Left colon (tissue), 2 donors: ENCODE measurements at regions of chr12 and their contacts with region 1.

Region 1: DNA sequence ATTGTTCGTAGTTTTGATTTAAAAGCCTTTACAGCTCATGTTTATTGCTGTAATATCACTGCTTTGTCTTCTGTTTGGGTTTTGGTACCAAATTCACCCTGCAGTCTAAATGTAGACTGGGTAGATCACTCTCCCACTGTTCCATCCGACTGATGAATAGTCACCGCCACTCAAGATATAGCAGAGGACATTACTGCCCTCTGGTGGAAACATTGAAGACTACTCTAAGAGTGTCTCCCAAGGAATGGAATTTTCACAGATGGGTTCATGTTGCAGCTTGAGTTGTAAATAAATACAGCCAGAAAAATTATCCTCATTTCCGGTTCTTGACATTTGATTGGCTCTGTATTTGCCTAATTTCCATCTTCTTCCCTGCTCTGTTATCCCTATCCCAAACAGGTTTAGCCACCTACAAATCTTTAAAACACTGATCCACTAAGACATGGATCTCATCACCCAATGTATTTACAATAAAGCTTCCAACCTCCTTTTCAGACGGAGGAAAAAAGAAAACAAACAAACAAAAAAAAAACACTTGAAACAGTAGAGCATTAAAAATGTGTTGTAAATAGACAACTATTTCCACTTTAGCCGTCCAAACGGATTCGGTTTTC is 198.3 kb upstream of the CPNE8 start:
- DNase-seq: no peak
- ATAC-seq: peak; percentile 96

Region 2: GRCh38 chr12:38921025-38921677 is 182.5 kb before region 1 on chr12:
- intact Hi-C with region 1: loop called in 1 of 2 experiments (anchors 5 kb)
- DNase-seq: peak; percentile 60 to 75
- ATAC-seq: peak; percentile 96

Region 3: DNA sequence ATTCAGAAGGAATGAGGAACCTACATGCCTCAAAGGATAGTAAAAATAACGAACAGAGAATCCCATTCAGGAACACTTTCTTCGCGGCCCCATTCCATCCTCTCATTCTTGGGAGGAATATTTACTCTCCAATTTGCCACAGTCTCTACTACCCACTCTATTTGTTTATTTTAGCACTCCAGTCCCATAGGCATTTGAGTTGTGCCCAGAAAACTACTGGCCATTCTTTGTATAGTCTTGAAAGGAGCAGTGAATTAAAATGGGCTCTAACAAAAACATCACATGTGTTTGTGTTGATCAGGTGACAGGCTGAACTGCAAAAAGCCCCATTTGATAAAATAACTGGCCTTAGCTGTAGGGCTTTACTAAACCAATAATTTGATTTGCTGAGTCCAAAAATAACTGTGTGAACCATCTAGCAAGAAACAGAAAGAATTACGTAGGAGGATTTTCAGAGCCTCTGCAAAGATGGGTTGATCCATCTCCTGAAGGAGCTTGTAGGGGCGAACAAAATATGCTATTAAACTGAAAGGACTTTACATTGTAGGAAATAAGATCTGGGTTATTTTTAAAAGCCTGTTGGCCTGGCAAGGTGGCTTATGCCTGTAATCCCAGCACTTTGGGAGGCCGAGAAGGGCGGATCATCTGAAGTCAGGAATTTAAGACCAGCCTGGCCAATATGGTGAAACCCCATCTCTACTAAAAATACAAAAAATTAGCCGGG is 56.0 kb before region 1 on chr12:
- intact Hi-C with region 1: no loop called
- DNase-seq: no peak
- ATAC-seq: no peak